Right ventricle myocardium inferior (tissue), 1 donor: ENCODE measurements at regions of chr18 and their contacts with region 1.

Region 1: GRCh38 chr18:22813648-22814328 is 119.3 kb upstream of the RBBP8 start:
- DNase-seq: no peak
- ATAC-seq: no peak

Region 2: DNA sequence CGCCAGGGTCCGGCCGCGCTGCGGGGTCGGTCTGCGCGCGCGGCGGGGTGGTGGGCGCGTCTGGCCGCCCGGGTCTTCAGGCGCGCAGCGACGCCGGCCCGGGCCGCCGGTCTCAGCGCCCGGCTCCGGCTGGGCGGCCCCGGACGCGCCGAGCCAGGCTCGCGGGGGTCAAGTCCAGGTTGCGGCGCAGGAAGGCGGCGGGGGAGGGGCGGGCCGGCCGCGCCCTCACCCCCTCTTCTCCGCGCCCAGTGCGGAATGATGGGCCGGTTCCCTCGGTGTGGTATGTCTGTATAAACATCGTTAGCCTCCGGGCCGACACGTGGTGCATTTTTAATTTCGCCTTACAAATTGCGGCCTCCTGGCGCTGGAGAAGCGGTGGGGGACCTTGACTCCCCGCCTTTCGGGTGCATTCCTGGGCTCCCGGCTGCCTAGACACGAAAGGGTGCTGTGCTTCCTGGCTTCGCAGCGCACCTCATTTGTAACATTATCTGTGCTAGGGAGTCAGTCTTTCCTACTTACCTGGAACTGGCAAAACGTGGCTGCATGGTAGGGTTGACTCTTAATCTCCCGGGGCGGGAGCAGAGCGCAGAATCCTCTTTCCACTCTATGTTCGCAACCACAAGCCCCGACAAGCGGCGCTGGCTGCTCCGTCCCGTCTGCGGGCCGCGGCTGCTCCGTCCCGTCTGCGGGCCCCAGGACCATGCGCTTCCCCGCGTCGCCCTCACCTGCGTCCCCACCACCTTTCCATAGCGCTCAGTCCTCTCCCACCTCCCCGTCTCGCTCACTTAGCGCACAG is 465.1 kb before region 1 on chr18:
- intact Hi-C with region 1: no loop called
- DNase-seq: peak; percentile 89
- ATAC-seq: peak; percentile 70

Region 3: GRCh38 chr18:23377669-23378301 is 564.0 kb after region 1 on chr18:
- intact Hi-C with region 1: loop called (anchors 10 kb)
- DNase-seq: no peak
- ATAC-seq: peak; percentile 64